ENCODE measurements at regions of chr6 and their contacts with region 1.

Region 1: DNA sequence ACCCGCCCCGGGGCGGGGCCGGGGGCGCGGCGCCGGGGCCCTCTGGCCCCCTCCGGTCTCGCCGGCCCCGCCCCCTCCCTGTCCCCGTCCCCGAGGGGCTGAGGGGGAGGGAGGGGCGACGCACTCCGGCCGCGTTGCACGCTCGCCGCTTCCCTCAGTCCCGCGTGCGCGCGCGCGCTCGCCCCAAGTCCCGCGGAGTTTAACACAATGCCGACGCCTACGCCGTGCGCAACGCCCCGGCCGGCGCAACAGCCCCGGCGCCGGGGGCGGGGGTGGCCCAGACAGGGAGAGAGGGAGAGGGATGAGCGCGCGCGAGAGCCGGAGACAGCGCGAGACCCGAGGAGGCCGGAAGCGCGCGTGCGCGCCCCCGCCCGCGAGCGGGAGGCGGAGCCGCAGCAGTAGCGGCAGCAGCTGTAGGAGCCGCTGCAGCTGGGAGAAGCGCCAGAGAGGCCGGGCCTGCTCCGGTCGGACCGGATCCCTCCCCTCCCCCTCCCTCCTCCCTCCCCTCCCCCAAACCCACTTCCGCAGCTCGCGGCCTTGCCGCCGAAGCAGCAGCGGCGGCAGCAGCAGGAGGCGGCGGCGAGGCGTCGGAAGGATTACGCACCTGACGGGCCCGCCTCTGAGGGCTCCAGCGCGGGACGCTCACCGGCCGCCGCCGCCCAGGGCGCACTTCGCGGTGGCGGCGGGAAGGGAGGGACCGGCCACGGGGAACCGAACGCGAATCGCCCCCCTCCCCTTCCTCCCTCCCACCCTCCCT is 905 bp downstream of the ZBTB2 start:
- DNase-seq: peak; percentile 98 to 99 (median 99)
- ATAC-seq: peak; percentile 94 to 95
- H3K4me3 ChIP-seq: peak overlapping the region; percentile 83
- H3K27ac ChIP-seq: peak overlapping the region; percentile 97
- H3K4me1 ChIP-seq: peaks cover 3% of the 10 kb centered on the region
- H3K27me3 ChIP-seq: no peaks in the 10 kb centered on the region

Region 2: DNA sequence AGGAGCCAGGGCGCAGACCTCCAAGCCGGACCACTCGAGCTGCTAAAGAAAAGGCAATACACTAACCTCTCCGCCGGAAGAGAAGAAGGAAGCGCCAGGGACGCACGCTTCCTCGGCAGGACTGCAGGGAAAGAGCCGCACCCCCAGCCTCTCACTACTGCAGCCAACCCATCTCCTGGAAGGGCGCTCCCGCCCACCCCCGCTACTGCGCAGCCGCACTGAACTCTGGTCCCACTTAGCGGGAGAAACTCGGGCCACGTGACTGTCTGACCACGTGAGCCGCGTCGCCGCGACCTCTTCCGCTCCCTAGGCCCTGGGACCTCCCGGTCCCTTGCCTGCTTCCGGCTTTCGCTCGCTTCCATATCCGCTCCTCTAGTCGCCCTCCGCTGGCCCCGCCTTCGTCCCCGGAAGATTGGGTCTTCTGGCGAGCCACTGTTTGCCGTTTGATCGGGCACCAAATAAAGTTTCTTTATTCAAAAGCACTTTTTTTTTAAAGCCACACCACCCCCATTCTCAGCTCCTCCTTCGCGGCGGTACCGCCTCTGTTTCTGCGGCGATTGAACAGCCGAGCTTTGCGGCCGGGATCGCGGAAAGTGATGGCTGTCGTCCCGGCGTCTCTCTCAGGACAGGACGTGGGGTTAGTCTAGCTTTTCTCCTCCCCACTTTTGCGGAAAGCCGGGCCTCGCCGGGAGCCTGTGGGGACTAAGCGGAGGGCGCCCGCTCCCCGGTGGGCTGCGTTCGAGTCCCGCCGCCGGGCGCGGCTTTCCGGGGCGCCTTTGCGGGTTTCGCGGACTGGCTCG is 61.7 kb after region 1 on chr6 and contains the start of gene RMND1:
- intact Hi-C with region 1: loop called in 1 of 4 experiments (anchors 10 kb)
- DNase-seq: peak; percentile 100
- ATAC-seq: peak; percentile 99
- H3K4me3 ChIP-seq: peak within 1 kb of the TSS; percentile 95
- H3K27ac ChIP-seq: peak within 1 kb of the TSS; percentile 95
- H3K4me1 ChIP-seq: no peaks in the 10 kb centered on the region
- H3K27me3 ChIP-seq: no peaks in the 10 kb centered on the region
- total RNA-seq, gene RMND1: 10.9 to 15.2 (median 11.7) TPM

Region 3: GRCh38 chr6:151609553-151609979 is 219.1 kb after region 1 on chr6:
- intact Hi-C with region 1: no loop called
- DNase-seq: peak; percentile 60 to 87 (median 82)
- ATAC-seq: peak; percentile 89 to 97
- H3K4me3 ChIP-seq: no peak overlapping the region
- H3K27ac ChIP-seq: no peak overlapping the region
- H3K4me1 ChIP-seq: no peaks in the 10 kb centered on the region
- H3K27me3 ChIP-seq: no peaks in the 10 kb centered on the region